ENCODE measurements at regions of chr7 and their contacts with region 1.

Region 1: DNA sequence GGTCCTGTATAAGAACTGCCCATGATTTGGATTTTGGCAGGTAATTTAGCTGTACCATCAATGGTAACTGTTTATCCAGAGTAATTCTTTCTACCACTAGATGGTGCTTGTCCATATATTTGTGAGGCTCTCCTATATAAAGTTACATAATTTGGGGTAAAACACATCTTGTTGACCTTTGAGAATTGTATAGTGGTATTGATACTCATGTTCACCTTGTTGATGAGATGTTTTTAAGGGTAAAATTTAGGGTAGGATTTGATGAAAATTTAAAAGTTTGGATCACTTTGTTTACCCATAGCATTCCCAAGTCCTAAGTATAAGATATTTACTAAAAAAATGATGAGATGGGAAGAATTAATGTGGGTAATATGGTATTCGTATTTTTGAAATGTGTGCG is 31.6 kb downstream of the ST7 start:
- DNase-seq: no peak
- H3K4me3 ChIP-seq: no peak overlapping the region
- CTCF ChIP-seq: no peak
- POLR2A ChIP-seq: no peak

Region 2: GRCh38 chr7:117119192-117119924 is 134.4 kb after region 1 on chr7:
- intact Hi-C with region 1: loop called (anchors 5 kb)
- DNase-seq: peak; percentile 75 to 95
- H3K4me3 ChIP-seq: no peak overlapping the region
- CTCF ChIP-seq: peak in 1 of 3 donors; percentile 60
- POLR2A ChIP-seq: no peak

Region 3: GRCh38 chr7:118288098-118288497 is 1303.2 kb after region 1 on chr7:
- intact Hi-C with region 1: no loop called
- DNase-seq: no peak
- H3K4me3 ChIP-seq: no peak overlapping the region
- CTCF ChIP-seq: no peak
- POLR2A ChIP-seq: no peak